ENCODE measurements at regions of chr3 and their contacts with region 1.

Region 1: GRCh38 chr3:100590114-100590839 is 19.1 kb upstream of the ADGRG7 start:
- DNase-seq: peak in 4 of 5 donors; percentile 38 to 75 (median 44)
- H3K4me3 ChIP-seq: no peak overlapping the region
- H3K27ac ChIP-seq: no peak overlapping the region
- H3K4me1 ChIP-seq: no peaks in the 10 kb centered on the region
- H3K27me3 ChIP-seq: no peaks in the 10 kb centered on the region
- CTCF ChIP-seq: peak; percentile 68 to 78 (median 71)
- EP300 ChIP-seq: no peak
- POLR2A ChIP-seq: no peak

Region 2: GRCh38 chr3:99825004-99825640 is 765.2 kb before region 1 on chr3:
- intact Hi-C with region 1: loop called in 2 of 4 experiments (anchors 10 kb)
- DNase-seq: no peak
- H3K4me3 ChIP-seq: no peak overlapping the region
- H3K27ac ChIP-seq: no peak overlapping the region
- H3K4me1 ChIP-seq: no peaks in the 10 kb centered on the region
- H3K27me3 ChIP-seq: no peaks in the 10 kb centered on the region
- CTCF ChIP-seq: no peak
- EP300 ChIP-seq: no peak
- POLR2A ChIP-seq: no peak

Region 3: GRCh38 chr3:99833617-99834205 is 756.6 kb before region 1 on chr3:
- intact Hi-C with region 1: loop called in 2 of 4 experiments (anchors 10 kb)
- DNase-seq: peak in 2 of 5 donors; percentile 23 to 30
- H3K4me3 ChIP-seq: no peak overlapping the region
- H3K27ac ChIP-seq: peak overlapping the region in 1 of 2 donors; percentile 43
- H3K4me1 ChIP-seq: peaks cover 4% of the 10 kb centered on the region
- H3K27me3 ChIP-seq: no peaks in the 10 kb centered on the region
- CTCF ChIP-seq: no peak
- EP300 ChIP-seq: no peak
- POLR2A ChIP-seq: no peak

Region 4: GRCh38 chr3:100463002-100463401 is 127.3 kb before region 1 on chr3:
- intact Hi-C with region 1: loop called in 1 of 4 experiments (anchors 5 kb)
- DNase-seq: peak in 1 of 5 donors; percentile 28
- H3K4me3 ChIP-seq: no peak overlapping the region
- H3K27ac ChIP-seq: no peak overlapping the region
- H3K4me1 ChIP-seq: no peaks in the 10 kb centered on the region
- H3K27me3 ChIP-seq: no peaks in the 10 kb centered on the region
- CTCF ChIP-seq: peak; percentile 16 to 35 (median 32)
- EP300 ChIP-seq: no peak
- POLR2A ChIP-seq: no peak